Activated CD4-positive, alpha-beta memory T cell treated with anti-CD3 and anti-CD28 coated beads for 36 hours (primary cell): ENCODE measurements at regions of chr1 and their contacts with region 1.

Region 1: DNA sequence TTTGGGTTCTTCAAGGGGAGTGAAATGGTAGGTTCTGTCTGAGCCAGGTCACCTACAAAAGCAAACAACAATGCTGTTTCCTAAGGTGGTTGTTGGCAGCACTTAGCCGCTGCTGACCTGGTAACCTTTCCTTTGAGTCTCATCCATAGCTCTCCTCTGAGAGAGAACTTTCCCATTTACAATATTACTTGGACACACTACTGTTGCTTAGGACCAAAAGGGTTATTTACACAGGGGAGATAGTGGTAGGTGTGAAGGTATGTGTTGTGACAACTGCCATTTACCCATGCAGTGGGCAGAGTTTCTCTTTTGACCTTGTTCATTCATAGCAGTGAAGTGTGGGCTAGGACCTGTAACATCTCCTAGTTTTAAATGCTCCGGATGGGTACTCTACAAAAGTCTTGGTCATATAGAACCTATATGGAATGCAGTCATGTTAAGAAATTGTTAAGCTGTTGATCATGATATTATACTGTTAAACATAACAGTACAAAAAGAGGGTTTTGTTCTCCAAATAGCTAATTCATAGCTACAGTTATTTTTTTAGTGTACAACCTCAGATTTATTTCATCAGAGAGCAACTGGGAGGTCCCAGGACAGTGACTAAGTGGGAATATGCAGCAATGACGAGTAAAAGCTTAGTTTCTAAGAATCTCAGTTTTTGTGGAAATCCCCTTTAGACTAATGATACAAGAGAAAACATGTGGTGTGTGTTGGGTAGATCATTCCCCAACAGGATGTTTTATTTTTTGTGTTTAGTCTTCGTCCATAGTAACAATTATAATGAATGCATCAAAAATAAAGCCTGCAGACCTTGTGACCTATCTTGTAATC is 219.7 kb downstream of the NFIA start:
- DNase-seq: peak; percentile 51
- H3K4me3 Mint-ChIP-seq: peak overlapping the region; percentile 1
- H3K27ac Mint-ChIP-seq: peak overlapping the region; percentile 89
- H3K4me1 Mint-ChIP-seq: peaks cover 35% of the 10 kb centered on the region
- H3K27me3 Mint-ChIP-seq: peaks cover 5% of the 10 kb centered on the region

Region 2: DNA sequence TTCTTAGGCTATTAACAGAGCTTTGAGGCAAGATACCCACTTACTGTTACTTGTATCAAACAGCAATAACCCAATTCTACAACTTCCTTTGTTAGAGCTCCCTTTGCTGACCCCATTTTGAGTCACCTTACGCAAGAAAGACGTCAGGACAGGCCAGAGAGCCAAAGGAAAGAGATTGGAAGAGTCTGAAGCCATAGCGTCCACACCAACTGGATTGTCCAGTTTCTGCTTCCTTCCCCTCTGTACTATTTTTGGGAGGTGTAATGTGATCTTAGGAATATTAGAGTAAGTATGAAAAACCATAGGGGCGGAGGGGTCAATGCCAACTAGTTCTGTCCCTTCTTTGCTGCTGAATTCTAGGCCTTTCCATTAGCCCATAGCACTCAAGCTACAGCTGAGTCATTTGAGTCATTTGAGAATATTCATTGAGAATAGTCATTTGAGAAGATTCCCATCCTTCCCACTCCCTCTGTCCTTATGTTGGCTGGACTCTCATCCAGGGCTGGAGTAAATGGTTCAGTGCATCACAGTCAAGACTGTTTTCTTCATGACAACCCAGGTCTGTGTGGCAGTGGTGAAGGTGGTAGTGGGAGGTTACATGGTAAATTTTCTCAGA is 234.5 kb before region 1 on chr1:
- CTCF ChIA-PET with region 1: no interaction called
- POLR2A ChIA-PET with region 1: no interaction called
- intact Hi-C with region 1: no loop called
- DNase-seq: no peak
- H3K4me3 Mint-ChIP-seq: no peak overlapping the region
- H3K27ac Mint-ChIP-seq: no peak overlapping the region
- H3K4me1 Mint-ChIP-seq: no peaks in the 10 kb centered on the region
- H3K27me3 Mint-ChIP-seq: no peaks in the 10 kb centered on the region

Region 3: DNA sequence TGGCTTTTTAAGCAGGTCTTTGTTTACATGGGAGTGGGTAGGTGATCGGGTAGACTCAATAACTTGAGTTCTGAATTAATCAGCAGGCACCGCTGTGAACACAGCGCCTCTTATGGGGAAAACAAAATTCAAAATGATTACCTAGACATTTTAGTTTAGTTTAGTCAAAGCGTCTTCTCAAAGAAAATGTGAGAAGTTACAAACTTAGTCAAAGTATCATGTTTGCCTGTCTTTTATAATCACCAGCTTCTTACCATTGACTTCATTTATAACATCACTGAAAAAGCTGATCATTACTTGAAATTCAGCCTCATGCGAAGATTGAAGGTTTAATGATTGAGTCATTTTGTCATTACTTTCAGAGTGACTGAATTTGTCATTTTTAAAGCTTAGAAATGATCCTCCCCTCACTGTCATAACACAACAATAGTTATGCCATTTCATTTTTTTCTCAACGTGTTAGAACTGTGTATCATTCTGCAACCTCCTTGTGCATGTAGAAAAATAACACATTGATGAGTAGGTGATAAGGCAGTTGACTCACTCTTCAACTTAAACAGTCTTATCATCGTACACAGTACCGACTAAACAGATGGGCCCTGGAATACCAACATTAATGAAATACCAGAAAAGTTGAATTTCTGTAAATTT is 31.2 kb before region 1 on chr1:
- CTCF ChIA-PET with region 1: interaction called, 34 read pairs
- POLR2A ChIA-PET with region 1: interaction called, 60 read pairs
- intact Hi-C with region 1: loop called (anchors 1 kb)
- DNase-seq: peak; percentile 58
- H3K4me3 Mint-ChIP-seq: peak overlapping the region; percentile 26
- H3K27ac Mint-ChIP-seq: peak overlapping the region; percentile 86
- H3K4me1 Mint-ChIP-seq: peaks cover 53% of the 10 kb centered on the region
- H3K27me3 Mint-ChIP-seq: peaks cover 5% of the 10 kb centered on the region

Region 4: DNA sequence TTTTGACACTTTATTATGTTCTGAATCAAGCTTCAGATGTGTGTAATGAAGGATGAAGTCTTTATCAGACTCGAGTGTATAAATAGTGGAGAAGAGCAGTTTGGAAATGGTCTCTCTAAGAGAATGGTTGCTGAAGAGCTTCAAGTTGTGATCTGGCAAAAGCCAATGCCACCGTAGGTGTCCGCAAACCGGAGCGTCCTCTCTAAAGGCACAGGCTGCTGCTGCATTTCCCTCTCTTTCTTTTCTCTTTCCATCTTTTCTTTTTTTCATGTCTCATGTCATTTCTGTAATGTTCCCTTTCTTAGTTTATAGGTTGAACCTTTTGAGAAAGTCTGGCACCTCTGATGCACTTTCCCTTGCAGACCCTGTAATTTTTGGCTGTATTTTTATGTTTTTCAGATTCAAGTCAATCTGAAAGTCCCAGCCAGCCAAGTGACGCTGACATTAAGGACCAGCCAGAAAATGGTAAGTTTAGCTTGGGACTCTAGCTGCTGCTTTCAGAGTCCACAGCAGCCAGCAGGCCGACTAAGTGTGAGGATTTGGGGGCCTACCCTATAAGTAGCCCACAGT is 24.8 kb before region 1 on chr1:
- CTCF ChIA-PET with region 1: interaction called, 34 read pairs
- POLR2A ChIA-PET with region 1: interaction called, 60 read pairs
- intact Hi-C with region 1: loop called (anchors 1 kb)
- DNase-seq: no peak
- H3K4me3 Mint-ChIP-seq: no peak overlapping the region
- H3K27ac Mint-ChIP-seq: peak overlapping the region; percentile 19
- H3K4me1 Mint-ChIP-seq: peaks cover 31% of the 10 kb centered on the region
- H3K27me3 Mint-ChIP-seq: peaks cover 2% of the 10 kb centered on the region

Region 5: DNA sequence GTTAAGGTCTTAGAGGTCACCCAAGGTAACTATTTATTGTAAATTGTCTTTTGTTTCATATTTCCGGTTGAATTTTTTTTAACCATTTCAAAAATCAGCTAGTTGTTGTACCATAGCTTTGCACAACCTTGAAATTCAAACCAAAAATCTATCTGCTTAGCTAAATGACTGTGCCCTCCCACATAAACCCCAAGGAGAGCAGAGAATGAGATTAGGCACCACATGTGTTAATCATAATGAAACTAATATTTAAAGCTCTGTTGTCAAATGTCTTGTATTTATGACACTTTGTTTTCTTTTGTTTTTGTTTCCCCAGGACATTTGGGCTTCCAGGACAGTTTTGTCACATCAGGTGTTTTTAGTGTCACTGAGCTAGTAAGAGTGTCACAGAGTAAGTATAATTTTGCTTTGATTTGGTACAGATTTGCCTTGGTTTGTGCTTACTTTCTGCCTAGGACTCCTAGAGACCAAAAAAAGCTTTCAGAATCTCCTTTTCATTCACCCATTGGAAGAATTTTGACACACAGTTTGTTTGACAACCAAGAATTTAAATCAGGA is 30.2 kb after region 1 on chr1:
- CTCF ChIA-PET with region 1: interaction called, 15 read pairs
- POLR2A ChIA-PET with region 1: interaction called, 31 read pairs
- intact Hi-C with region 1: loop called (anchors 1 kb)
- DNase-seq: peak; percentile 30
- H3K4me3 Mint-ChIP-seq: no peak overlapping the region
- H3K27ac Mint-ChIP-seq: peak overlapping the region; percentile 67
- H3K4me1 Mint-ChIP-seq: peaks cover 24% of the 10 kb centered on the region
- H3K27me3 Mint-ChIP-seq: peaks cover 2% of the 10 kb centered on the region

Region 6: GRCh38 chr1:61378494-61379180 is 76.6 kb after region 1 on chr1:
- CTCF ChIA-PET with region 1: no interaction called
- POLR2A ChIA-PET with region 1: no interaction called
- intact Hi-C with region 1: no loop called
- DNase-seq: no peak
- H3K4me3 Mint-ChIP-seq: no peak overlapping the region
- H3K27ac Mint-ChIP-seq: no peak overlapping the region
- H3K4me1 Mint-ChIP-seq: no peaks in the 10 kb centered on the region
- H3K27me3 Mint-ChIP-seq: no peaks in the 10 kb centered on the region